RWPE1 (cell line): ENCODE measurements at regions of chr1 and their contacts with region 1.

Region 1: GRCh38 chr1:195472291-195472690 is 1135.9 kb downstream of the KCNT2 start:
- DNase-seq: no peak
- H3K27ac ChIP-seq: no peak overlapping the region
- CTCF ChIP-seq: no peak

Region 2: GRCh38 chr1:195594322-195594721 is 122.0 kb after region 1 on chr1:
- CTCF ChIA-PET with region 1: no interaction called
- POLR2A ChIA-PET with region 1: interaction called, 10 read pairs
- DNase-seq: no peak
- H3K27ac ChIP-seq: no peak overlapping the region
- CTCF ChIP-seq: no peak